ENCODE measurements at regions of chr7 and their contacts with region 1.

Region 1: GRCh38 chr7:79806161-79806734 is 328.4 kb upstream of the GNAI1 start:
- DNase-seq: peak; percentile 25
- H3K4me3 ChIP-seq: no peak overlapping the region
- H3K27ac ChIP-seq: no peak overlapping the region
- H3K4me1 ChIP-seq: no peaks in the 10 kb centered on the region
- H3K27me3 ChIP-seq: peaks cover 29% of the 10 kb centered on the region
- CTCF ChIP-seq: peak; percentile 34

Region 2: GRCh38 chr7:80018941-80019752 is 212.9 kb after region 1 on chr7:
- CTCF ChIA-PET with region 1: no interaction called
- POLR2A ChIA-PET with region 1: no interaction called
- intact Hi-C with region 1: loop called (anchors 10 kb)
- DNase-seq: peak; percentile 71
- H3K4me3 ChIP-seq: no peak overlapping the region
- H3K27ac ChIP-seq: no peak overlapping the region
- H3K4me1 ChIP-seq: peaks cover 10% of the 10 kb centered on the region
- H3K27me3 ChIP-seq: no peaks in the 10 kb centered on the region
- CTCF ChIP-seq: peak; percentile 97

Region 3: GRCh38 chr7:80047856-80048459 is 241.7 kb after region 1 on chr7:
- CTCF ChIA-PET with region 1: no interaction called
- POLR2A ChIA-PET with region 1: no interaction called
- intact Hi-C with region 1: loop called (anchors 5 kb)
- DNase-seq: no peak
- H3K4me3 ChIP-seq: no peak overlapping the region
- H3K27ac ChIP-seq: no peak overlapping the region
- H3K4me1 ChIP-seq: no peaks in the 10 kb centered on the region
- H3K27me3 ChIP-seq: no peaks in the 10 kb centered on the region
- CTCF ChIP-seq: peak; percentile 54

Region 4: DNA sequence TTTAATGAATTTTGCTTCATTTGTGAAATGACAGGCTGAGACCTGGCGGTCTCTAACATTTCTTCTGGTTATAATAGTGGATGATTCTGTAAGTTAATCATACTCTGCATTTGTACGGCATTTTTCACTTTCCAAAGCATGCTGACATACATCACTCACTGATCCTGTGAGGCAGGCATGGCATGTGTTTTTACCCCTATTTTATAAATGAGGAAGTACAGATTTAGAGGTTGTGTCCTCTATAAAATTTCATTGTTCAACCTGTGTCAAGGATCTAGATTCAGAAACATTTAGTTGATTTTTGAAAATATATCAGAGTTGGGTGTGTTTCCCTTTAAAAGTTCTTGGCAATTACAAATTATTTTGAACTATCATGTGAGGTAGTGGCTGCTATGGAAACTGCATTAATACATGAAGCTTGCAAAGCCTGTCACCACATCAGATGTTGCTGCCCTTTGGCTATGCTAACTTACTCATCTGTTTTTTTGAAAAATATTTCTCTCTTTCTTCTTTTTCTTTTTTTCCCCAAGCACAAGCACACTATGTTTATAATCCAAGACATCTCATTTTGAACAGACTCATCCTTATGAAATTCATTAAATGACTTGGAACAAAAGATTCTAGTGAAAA is 501.1 kb after region 1 on chr7:
- CTCF ChIA-PET with region 1: no interaction called
- POLR2A ChIA-PET with region 1: no interaction called
- intact Hi-C with region 1: no loop called
- DNase-seq: peak; percentile 17
- H3K4me3 ChIP-seq: no peak overlapping the region
- H3K27ac ChIP-seq: no peak overlapping the region
- H3K4me1 ChIP-seq: peaks cover 3% of the 10 kb centered on the region
- H3K27me3 ChIP-seq: no peaks in the 10 kb centered on the region
- CTCF ChIP-seq: no peak